Astrocyte of the cerebellum (primary cell): ENCODE measurements at regions of chrX and their contacts with region 1.

Region 1: GRCh38 chrX:74133156-74133796 is 170.7 kb upstream of the ZCCHC13 start:
- DNase-seq: peak; percentile 63
- H3K4me3 ChIP-seq: no peak overlapping the region
- CTCF ChIP-seq: peak; percentile 64

Region 2: DNA sequence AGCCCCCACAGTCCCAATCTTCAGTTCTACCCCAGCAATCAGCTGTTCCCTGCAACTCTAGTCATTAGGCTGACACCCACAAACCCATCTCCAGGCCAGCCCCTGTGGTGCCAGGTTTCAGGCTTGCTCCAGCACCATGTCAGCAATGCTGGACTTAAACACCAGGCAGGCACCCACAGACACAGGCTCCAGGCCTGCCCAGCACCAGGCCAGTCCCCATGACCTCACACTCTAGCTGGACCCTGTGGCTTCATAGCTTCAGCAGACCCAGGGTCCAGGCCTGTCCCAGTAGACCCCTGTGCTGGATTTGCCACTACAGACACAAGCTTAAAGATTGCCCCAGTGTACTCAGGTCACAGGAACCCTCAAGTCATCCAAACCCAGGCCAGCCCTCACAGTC is 270.0 kb before region 1 on chrX:
- in situ Hi-C with region 1: loop called (anchors 10 kb)
- DNase-seq: no peak
- H3K4me3 ChIP-seq: no peak overlapping the region
- CTCF ChIP-seq: no peak